Head of caudate nucleus (tissue), 42 donors: ENCODE measurements at regions of chr6 and their contacts with region 1.

Region 1: DNA sequence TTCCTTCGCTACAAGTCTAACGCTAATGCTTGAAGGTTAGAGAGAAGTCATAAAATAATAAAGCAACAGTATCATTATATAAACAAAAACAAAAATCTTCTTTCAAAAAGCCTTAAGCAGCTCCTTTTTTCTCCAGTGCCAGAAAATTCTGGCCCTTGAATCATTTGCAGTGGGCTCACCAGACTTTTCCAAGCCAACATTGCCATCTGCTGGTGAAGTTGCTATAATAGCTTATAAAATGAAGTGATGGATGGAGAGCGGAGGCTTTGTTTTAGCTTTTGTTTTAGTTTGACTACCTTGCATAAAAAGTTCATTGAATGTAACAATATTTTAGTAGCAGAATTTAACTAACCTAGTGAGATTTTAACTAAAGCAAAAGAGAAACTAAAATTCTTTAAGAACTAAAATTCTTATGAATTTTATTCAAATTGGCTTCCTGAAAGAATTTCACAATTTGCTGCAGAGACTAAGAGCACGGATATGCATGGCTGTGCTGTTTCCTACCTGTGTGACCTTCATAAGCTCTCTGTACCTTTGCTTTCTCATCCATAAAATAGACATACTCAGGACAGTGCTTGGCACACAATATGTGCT is 44.8 kb upstream of the SLC2A12 start:
- DNase-seq: peak in 41 of 42 donors; percentile 36 to 92 (median 75)

Region 2: GRCh38 chr6:133568970-133569889 is 528.0 kb before region 1 on chr6:
- intact Hi-C with region 1: loop called (anchors 10 kb)
- DNase-seq: peak; percentile 19 to 87 (median 55)

Region 3: DNA sequence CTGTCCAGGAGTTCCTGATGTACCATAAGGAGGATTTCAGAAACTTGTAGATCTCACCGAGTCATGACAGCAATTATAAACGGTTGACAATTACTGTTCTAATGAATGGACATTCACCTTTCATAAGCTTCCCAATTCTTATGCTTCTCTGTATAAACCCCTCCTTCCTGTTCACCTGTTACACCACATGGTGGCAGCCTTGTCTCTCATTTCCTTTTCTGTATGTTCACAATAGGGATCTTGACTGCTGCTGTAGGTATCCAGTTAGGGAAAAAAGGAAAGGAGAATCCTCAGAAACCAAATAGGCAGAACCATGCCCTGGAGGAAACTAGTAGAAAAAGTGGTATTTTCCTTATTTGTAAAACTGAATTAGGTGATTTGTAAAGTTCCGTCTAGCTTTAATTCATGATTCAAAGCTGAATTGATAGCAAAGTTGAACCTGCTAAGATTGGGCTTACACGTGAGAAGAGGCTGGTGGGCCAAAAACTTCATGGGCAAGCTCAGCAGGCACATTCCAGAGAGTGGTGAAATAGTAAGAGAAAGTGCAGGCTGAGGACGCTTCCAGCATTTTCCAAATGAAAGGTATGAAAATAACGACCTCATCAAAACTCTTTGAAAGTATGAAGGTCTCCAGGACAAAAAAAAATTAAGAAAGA is 173.1 kb before region 1 on chr6:
- intact Hi-C with region 1: loop called (anchors 5 kb)
- DNase-seq: peak in 41 of 42 donors; percentile 29 to 90 (median 75)

Region 4: GRCh38 chr6:133973109-133973971 is 123.9 kb before region 1 on chr6:
- intact Hi-C with region 1: loop called (anchors 10 kb)
- DNase-seq: peak in 4 of 42 donors; percentile 14 to 66 (median 39)